ENCODE measurements at regions of chr1 and their contacts with region 1.

Region 1: DNA sequence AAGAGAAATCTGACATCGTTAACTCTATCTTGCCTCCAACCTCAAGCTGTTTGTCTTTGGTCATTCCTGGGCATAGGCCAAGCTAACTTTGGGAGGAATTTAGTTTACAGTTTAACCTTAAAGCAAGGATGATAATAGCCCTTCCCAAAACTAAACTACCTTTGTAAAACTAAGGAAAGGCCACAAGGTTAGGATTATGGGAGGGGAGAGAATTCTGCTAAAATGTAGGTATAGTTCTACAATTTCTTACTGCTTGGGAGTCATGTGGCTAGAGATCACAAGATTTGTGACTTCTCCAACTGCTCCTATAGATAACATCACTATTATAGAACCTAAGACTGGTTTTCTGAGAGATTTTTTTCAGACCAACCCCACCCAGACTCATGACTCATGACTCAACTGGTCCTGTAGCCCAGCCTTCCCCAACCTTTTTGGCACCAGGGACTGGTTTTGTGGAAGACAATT is 70.6 kb upstream of the MUTYH start:
- DNase-seq: no peak
- H3K4me3 ChIP-seq: no peak overlapping the region
- H3K27ac ChIP-seq: no peak overlapping the region
- H3K4me1 ChIP-seq: no peaks in the 10 kb centered on the region; a peak in 1 of 4 replicates
- H3K27me3 ChIP-seq: no peaks in the 10 kb centered on the region
- CTCF ChIP-seq: no peak
- EP300 ChIP-seq: no peak
- RAD21 ChIP-seq: no peak

Region 2: DNA sequence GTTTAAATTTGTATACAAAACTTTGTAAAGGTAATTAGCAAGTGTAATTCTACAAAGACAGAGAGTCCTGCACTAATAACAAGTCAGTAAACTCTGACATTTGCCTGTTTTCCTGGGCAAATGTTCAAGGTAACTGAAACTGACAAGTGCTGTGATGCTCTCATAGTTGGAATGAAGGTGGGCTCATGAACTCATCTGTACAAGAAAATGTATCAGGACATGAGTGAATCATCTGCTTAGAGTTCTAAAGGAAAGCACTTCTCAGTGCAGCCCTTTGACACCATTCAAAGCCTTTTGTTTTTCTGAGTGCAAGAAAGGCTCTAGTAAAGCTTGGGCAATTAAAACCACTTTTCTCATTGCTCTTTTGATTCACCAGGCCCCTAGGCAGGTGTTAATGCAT is 307.3 kb before region 1 on chr1:
- CTCF ChIA-PET with region 1: no interaction called
- POLR2A ChIA-PET with region 1: no interaction called
- DNase-seq: no peak
- H3K4me3 ChIP-seq: no peak overlapping the region
- H3K27ac ChIP-seq: no peak overlapping the region
- H3K4me1 ChIP-seq: no peaks in the 10 kb centered on the region
- H3K27me3 ChIP-seq: no peaks in the 10 kb centered on the region
- CTCF ChIP-seq: no peak
- EP300 ChIP-seq: no peak
- RAD21 ChIP-seq: no peak

Region 3: DNA sequence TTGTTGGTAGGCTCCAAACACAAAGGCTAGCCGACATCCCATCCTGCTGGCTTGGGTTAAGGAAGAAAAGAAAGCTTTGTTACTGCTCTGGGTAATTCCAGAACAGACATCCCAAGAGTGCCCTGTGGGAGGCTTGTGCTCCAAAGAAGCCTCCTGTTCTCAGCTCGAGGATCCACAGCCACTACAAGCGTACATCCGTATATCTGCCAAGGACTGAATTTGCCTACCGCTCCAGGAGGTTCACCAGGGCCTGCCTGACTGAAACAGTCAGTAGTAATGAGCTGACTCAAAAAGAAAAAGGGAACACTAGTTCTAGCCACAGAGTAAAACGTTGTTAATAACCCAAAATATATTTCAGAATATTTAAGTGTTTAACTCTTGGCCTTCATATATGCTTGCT is 45.8 kb before region 1 on chr1:
- CTCF ChIA-PET with region 1: no interaction called
- POLR2A ChIA-PET with region 1: no interaction called
- DNase-seq: no peak
- H3K4me3 ChIP-seq: no peak overlapping the region
- H3K27ac ChIP-seq: no peak overlapping the region
- H3K4me1 ChIP-seq: no peaks in the 10 kb centered on the region
- H3K27me3 ChIP-seq: no peaks in the 10 kb centered on the region
- CTCF ChIP-seq: no peak
- EP300 ChIP-seq: no peak
- RAD21 ChIP-seq: no peak

Region 4: GRCh38 chr1:45395582-45395981 is 15.3 kb before region 1 on chr1:
- CTCF ChIA-PET with region 1: no interaction called
- POLR2A ChIA-PET with region 1: interaction called, 10 read pairs
- DNase-seq: no peak
- H3K4me3 ChIP-seq: no peak overlapping the region
- H3K27ac ChIP-seq: no peak overlapping the region
- H3K4me1 ChIP-seq: no peaks in the 10 kb centered on the region
- H3K27me3 ChIP-seq: no peaks in the 10 kb centered on the region
- CTCF ChIP-seq: no peak
- EP300 ChIP-seq: no peak
- RAD21 ChIP-seq: no peak